ENCODE measurements at regions of chr5 and their contacts with region 1.

Region 1: GRCh38 chr5:36079200-36079761 is 12.6 kb upstream of the UGT3A2 start:
- DNase-seq: peak; percentile 68 to 71
- H3K4me3 ChIP-seq: no peak overlapping the region
- H3K4me3 Mint-ChIP-seq: no peak overlapping the region
- H3K27ac Mint-ChIP-seq: no peak overlapping the region
- H3K4me1 ChIP-seq: 0 out of 2 replicates have a peak, but pooled peaks cover 3% of the 10 kb centered on the region
- H3K4me1 Mint-ChIP-seq: no peaks in the 10 kb centered on the region
- H3K27me3 ChIP-seq: no peaks in the 10 kb centered on the region; the same call in 1 of the 2 replicates
- H3K27me3 Mint-ChIP-seq: peaks cover 11% of the 10 kb centered on the region
- CTCF ChIP-seq: peak; percentile 67 to 71

Region 2: DNA sequence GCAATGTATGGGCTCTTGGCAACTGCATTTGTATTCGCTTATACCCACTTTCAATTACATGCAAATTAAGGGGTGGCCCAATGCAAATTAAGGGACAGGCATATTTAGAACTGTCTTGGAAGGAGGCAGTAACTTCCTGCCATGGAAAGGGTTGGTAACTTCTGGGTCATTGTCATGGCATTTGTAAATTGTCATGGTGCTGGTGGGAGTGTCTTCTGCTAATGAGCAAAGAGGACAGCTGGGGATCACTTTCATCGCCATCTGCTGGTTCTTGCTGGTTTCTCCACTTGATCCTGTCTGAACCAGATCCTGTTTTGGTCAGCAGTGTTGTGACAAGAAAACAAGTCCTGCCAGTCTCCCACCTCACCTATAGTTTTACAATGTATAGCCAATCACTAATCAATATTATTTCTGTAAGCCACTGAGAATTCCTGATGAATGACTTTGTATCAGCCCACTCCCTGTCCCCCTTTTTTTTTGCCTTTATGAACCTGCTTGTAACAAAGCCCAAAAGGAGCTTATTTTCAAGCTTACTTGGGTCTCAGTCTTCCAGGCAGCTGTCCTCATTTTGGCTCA is 10.8 kb after region 1 on chr5:
- CTCF ChIA-PET with region 1: interaction called, 15 read pairs
- POLR2A ChIA-PET with region 1: no interaction called
- intact Hi-C with region 1: no loop called
- DNase-seq: peak in 1 of 2 experiments; percentile 16
- H3K4me3 ChIP-seq: no peak overlapping the region
- H3K4me3 Mint-ChIP-seq: no peak overlapping the region
- H3K27ac Mint-ChIP-seq: no peak overlapping the region
- H3K4me1 ChIP-seq: no peaks in the 10 kb centered on the region
- H3K4me1 Mint-ChIP-seq: no peaks in the 10 kb centered on the region
- H3K27me3 ChIP-seq: no peaks in the 10 kb centered on the region
- H3K27me3 Mint-ChIP-seq: no peaks in the 10 kb centered on the region
- CTCF ChIP-seq: peak in 1 of 2 experiments; percentile 17

Region 3: DNA sequence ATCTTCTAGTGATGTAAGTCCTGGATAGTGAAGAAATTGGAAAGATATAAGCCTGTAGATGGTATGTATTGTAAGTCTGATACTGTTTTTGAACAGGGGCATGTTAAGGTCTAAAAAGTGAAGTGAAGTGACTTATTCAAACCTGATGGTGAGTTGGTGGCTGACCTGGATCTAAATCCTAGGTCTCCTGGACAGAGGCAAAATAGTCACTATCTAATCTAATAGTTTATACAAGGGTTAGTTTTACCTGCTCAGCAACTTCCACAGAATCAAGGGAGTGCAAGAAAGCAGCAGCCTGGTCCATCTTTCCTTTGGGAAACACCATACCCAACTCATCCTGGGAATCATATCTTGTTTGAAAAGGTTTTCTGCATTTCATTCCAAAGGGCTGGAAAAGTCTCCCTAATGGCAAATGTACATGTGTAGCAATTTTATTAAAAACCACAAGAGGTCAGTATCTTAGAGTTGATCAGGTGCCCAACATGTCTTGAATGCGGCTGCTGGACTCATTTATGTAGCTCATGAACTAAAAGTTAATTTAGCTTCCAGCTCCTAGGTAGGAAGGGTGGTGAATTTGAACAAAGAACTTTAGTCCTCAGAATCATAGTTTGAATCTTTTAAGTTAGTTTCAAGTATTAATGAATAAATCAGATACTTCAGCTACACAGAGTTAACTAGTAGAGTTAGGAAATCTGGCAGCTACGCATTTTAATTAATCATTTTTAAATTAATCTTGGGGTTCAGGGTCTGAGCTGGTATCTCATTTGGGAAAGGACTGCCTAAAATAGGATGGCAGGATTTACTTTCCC is 98.6 kb after region 1 on chr5:
- CTCF ChIA-PET with region 1: interaction called, 30 read pairs
- POLR2A ChIA-PET with region 1: no interaction called
- intact Hi-C with region 1: loop called (anchors 1 kb)
- DNase-seq: peak in 1 of 2 experiments; percentile 24
- H3K4me3 ChIP-seq: no peak overlapping the region
- H3K4me3 Mint-ChIP-seq: no peak overlapping the region
- H3K27ac Mint-ChIP-seq: no peak overlapping the region
- H3K4me1 ChIP-seq: peaks cover 27% of the 10 kb centered on the region
- H3K4me1 Mint-ChIP-seq: peaks cover 44% of the 10 kb centered on the region
- H3K27me3 ChIP-seq: no peaks in the 10 kb centered on the region
- H3K27me3 Mint-ChIP-seq: no peaks in the 10 kb centered on the region
- CTCF ChIP-seq: peak; percentile 50 to 61

Region 4: GRCh38 chr5:36264202-36264760 is 185.0 kb after region 1 on chr5:
- CTCF ChIA-PET with region 1: no interaction called
- POLR2A ChIA-PET with region 1: no interaction called
- intact Hi-C with region 1: loop called (anchors 1 kb)
- DNase-seq: no peak
- H3K4me3 ChIP-seq: no peak overlapping the region
- H3K4me3 Mint-ChIP-seq: no peak overlapping the region
- H3K27ac Mint-ChIP-seq: no peak overlapping the region
- H3K4me1 ChIP-seq: no peaks in the 10 kb centered on the region
- H3K4me1 Mint-ChIP-seq: no peaks in the 10 kb centered on the region
- H3K27me3 ChIP-seq: no peaks in the 10 kb centered on the region
- H3K27me3 Mint-ChIP-seq: no peaks in the 10 kb centered on the region
- CTCF ChIP-seq: no peak

Region 5: GRCh38 chr5:36397901-36398536 is 318.7 kb after region 1 on chr5:
- CTCF ChIA-PET with region 1: interaction called, 4 read pairs
- POLR2A ChIA-PET with region 1: no interaction called
- intact Hi-C with region 1: loop called (anchors 1 kb)
- DNase-seq: peak in 1 of 2 experiments; percentile 48
- H3K4me3 ChIP-seq: no peak overlapping the region
- H3K4me3 Mint-ChIP-seq: no peak overlapping the region
- H3K27ac Mint-ChIP-seq: no peak overlapping the region
- H3K4me1 ChIP-seq: peaks cover 46% of the 10 kb centered on the region
- H3K4me1 Mint-ChIP-seq: peaks cover 35% of the 10 kb centered on the region
- H3K27me3 ChIP-seq: no peaks in the 10 kb centered on the region
- H3K27me3 Mint-ChIP-seq: no peaks in the 10 kb centered on the region
- CTCF ChIP-seq: peak; percentile 50 to 64